ENCODE measurements at regions of chr14 and their contacts with region 1.

Region 1: DNA sequence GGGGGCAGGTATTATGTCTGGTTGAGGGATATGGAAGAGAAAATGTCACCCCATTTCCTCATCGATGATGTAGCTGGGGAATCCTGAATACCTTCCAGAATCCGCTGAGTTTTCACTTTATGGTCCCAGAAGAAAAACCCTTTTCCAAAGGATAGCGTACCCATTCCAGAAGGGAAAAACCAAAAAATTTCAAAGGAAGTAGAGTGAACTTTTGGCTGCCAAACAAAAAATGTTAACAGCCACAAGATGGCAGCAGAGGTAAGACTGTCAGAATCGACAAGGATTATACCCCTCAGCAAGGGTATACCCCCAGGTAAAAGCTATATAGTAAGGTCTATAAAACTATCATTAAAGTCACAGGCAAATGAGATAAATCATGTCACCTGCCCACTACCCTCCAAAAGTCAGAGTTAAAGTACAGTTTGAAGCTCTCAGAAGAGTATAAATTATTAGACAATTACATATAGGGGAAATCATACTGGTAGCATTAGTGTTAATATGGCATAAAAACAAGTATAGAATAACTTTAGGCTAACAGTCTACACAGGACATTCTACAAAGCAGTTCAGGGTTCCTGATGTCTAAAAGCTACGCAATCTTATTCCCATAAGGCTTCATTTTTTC is 18.0 kb downstream of the ACIN1 start:
- DNase-seq: peak; percentile 35 to 65 (median 51)
- H3K4me3 ChIP-seq: no peak overlapping the region
- H3K27ac ChIP-seq: no peak overlapping the region
- H3K4me1 ChIP-seq: peaks cover 0 to 6% (median 5%) of the 10 kb centered on the region in 4 experiments
- H3K27me3 ChIP-seq: no peaks in the 10 kb centered on the region

Region 2: DNA sequence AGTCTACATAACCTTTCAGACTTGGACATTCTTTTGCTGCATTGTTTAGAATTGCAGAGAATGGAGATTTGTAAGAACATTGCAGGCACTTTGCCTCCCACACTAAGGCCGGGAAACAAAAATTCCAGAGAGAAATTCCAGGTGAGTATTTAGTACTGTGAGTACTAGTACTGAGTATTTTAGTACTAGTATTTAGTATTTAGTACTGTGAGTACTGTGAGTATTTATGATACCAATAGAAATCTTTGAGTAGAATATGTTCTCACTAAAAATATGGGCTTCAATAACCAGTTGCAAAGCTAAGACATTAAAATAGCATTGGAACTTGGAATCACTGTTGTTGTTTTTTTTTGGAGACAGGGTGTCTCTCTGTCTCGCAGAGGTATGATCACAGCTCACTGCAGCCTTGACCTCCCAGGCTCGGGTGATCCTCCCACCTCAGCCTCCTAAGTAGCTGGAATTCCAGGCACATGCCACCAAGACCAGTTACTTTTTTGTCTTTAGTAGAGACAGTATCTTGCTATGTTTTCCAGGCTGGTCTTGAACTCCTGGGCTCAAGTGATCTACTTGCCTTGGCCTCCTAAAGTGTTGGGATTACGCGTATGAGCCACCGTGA is 114.7 kb before region 1 on chr14:
- CTCF ChIA-PET with region 1: no interaction called
- POLR2A ChIA-PET with region 1: no interaction called
- DNase-seq: no peak
- H3K4me3 ChIP-seq: no peak overlapping the region
- H3K27ac ChIP-seq: no peak overlapping the region
- H3K4me1 ChIP-seq: peaks cover 0 to 4% (median 2%) of the 10 kb centered on the region in 4 experiments
- H3K27me3 ChIP-seq: no peaks in the 10 kb centered on the region

Region 3: GRCh38 chr14:23095196-23096108 is 18.6 kb after region 1 on chr14 and contains the start of gene C14orf119:
- CTCF ChIA-PET with region 1: interaction called, 153 read pairs
- POLR2A ChIA-PET with region 1: interaction called, 16 read pairs
- DNase-seq: peak; percentile 100
- H3K4me3 ChIP-seq: peak within 1 kb of the TSS; percentile 85 to 100 (median 96)
- H3K27ac ChIP-seq: peak within 1 kb of the TSS; percentile 98 to 99
- H3K4me1 ChIP-seq: peaks cover 15 to 33% (median 20%) of the 10 kb centered on the region in 4 experiments
- H3K27me3 ChIP-seq: no peaks in the 10 kb centered on the region

Region 4: GRCh38 chr14:23105348-23105824 is 28.5 kb after region 1 on chr14:
- CTCF ChIA-PET with region 1: interaction called, 200 read pairs
- POLR2A ChIA-PET with region 1: interaction called, 3 read pairs
- DNase-seq: no peak
- H3K4me3 ChIP-seq: no peak overlapping the region
- H3K27ac ChIP-seq: no peak overlapping the region
- H3K4me1 ChIP-seq: no peaks in the 10 kb centered on the region
- H3K27me3 ChIP-seq: peaks cover 0 to 3% (median 0%) of the 10 kb centered on the region in 5 experiments

Region 5: DNA sequence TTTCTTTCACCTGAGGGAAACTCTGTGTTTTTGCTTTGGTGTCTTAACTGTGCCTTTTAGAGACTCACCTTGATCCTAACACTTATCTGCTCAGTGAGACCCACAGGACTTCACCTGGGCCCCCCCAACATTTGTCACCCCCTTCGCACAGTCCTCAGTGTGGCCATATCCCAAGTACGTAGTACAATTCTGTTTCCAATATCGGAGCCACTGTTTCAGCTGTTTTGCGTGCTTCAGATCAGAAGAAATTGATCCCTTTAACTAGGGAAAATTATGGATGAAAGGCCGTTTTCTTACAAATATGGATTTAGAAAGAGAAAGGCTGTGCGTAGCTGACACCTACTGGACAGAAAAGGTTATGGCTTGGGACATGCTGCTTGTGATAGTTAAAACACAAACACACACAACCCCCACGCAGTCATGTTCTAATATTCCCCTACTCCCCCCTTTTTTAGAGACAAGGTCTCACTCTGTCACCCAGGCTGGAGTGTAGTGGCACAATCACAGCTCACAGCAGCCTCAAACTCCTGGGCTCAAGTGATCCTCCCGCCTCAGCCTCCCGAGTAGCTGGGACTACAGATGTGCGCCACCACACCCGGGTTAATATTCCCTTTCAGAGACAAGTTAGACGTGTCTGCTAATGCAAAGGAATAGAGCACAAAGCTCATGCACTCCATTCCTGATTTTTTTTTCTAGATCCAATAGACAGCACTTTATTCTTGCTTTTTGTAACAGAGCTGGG is 110.2 kb after region 1 on chr14:
- CTCF ChIA-PET with region 1: interaction called, 24 read pairs
- POLR2A ChIA-PET with region 1: no interaction called
- DNase-seq: peak; percentile 66 to 77 (median 71)
- H3K4me3 ChIP-seq: no peak overlapping the region
- H3K27ac ChIP-seq: no peak overlapping the region
- H3K4me1 ChIP-seq: peaks cover 0 to 14% (median 7%) of the 10 kb centered on the region in 4 experiments
- H3K27me3 ChIP-seq: peaks cover 0 to 6% (median 0%) of the 10 kb centered on the region in 5 experiments